Activated CD4-positive, alpha-beta memory T cell treated with anti-CD3 and anti-CD28 coated beads, Interleukin-2, amount 10 ng/mL, durations not matched to agents 7 days and 5 days (primary cell): ENCODE measurements at regions of chr13 and their contacts with region 1.

Region 1: DNA sequence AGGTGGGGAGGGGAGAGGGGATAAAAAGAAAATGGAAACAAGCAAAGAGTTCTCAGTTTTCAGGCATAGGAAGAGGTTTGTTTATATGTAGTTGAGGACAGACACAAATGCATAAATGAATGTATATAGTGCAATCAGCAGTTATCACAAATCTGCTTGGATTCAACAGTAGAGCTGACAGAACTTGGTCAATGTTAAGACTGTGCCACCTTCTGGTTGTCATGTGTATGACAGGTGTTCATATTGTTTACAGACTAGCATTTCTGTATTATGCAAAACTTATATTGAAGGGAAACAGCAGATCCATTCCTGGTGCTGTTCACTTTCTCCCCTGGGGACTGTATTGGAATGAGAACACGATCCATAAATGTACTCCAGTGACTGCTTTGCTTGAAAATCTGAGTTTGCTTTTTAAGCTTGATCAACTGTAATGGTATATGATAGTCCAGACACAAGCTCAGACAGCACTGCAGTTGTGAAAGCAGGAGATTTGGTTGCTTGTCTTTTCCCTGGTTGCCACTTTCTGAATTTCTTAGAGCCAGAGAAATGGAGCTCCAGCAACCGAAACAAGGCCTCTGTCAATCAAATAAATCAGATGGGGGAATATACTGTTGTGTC is 319.5 kb upstream of the OBI1 start:
- DNase-seq: peak; percentile 39
- H3K4me3 Mint-ChIP-seq: no peak overlapping the region
- H3K27ac Mint-ChIP-seq: no peak overlapping the region
- H3K4me1 Mint-ChIP-seq: no peaks in the 10 kb centered on the region
- H3K27me3 Mint-ChIP-seq: peaks cover 11% of the 10 kb centered on the region

Region 2: GRCh38 chr13:78137404-78138142 is 840.9 kb before region 1 on chr13:
- CTCF ChIA-PET with region 1: interaction called, 15 read pairs
- POLR2A ChIA-PET with region 1: no interaction called
- DNase-seq: peak; percentile 17
- H3K4me3 Mint-ChIP-seq: no peak overlapping the region
- H3K27ac Mint-ChIP-seq: no peak overlapping the region
- H3K4me1 Mint-ChIP-seq: peaks cover 5% of the 10 kb centered on the region
- H3K27me3 Mint-ChIP-seq: no peaks in the 10 kb centered on the region

Region 3: DNA sequence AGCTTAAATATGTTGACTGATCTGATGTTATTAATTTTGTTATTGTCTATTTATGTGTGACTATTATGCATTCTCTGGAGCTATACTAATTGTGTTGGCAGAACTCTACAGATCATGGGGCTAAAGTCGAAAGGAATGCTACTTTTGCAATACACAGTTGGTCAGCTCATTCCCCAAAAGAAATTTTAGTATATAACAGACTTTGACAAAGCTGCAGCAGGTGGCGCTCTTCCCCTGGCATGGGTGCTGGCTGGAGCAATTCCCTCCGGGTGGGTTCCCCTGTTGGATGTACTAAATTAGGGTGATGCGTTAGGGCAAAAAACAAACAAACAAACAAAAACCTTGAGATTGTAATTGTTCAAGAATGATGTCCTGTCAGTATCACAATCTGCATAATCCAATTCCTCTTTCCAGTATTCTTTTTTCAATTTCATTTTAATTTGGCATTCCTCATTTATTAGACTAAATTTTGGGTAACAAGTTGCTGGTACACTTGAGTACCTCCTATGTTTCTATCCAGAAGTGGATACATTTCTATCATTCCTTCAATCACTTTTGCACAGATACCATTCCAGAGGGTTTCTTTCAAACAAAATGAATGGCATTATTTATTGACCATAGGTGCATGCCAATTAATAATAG is 737.1 kb before region 1 on chr13:
- CTCF ChIA-PET with region 1: interaction called, 15 read pairs
- POLR2A ChIA-PET with region 1: no interaction called
- DNase-seq: peak; percentile 17
- H3K4me3 Mint-ChIP-seq: no peak overlapping the region
- H3K27ac Mint-ChIP-seq: no peak overlapping the region
- H3K4me1 Mint-ChIP-seq: no peaks in the 10 kb centered on the region
- H3K27me3 Mint-ChIP-seq: no peaks in the 10 kb centered on the region